ENCODE measurements at regions of chr5 and their contacts with region 1.

Region 1: DNA sequence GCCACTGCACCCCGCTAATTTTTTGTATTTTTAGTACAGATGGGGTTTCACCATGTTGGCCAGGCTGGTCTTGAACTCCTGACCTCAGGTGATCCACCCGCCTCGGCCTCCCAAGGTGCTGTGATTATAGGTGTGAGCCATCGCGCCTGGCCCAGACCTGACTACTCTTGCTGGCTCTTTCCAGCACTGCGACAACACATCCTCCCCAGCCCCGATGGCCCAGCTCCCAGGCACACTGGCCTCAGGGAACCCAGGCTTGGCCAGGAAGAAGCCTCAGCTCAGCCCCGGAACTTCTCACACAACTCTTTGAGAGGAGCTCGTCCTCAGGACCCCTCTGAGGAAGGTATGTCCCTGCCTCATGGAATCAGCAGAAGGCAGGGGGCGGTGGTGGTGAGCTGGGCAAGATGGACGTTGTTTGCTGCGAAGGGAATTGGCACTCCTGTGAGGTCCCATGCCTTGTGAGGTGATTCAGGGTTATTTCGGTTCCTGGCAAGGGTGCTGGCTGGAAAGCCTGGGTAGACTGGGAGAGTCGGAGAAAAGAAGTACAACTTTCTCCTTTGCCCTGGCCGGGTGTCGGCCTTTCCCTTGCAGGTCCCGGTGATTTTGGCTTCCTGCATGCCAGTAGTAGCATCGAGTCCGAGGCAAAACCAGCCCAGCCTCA is 5.9 kb downstream of the DELE1 start:
- DNase-seq: no peak
- H3K4me3 ChIP-seq: no peak overlapping the region
- H3K27ac ChIP-seq: no peak overlapping the region
- H3K4me1 ChIP-seq: no peaks in the 10 kb centered on the region
- H3K27me3 ChIP-seq: no peaks in the 10 kb centered on the region
- CTCF ChIP-seq: no peak
- POLR2A ChIP-seq: no peak

Region 2: DNA sequence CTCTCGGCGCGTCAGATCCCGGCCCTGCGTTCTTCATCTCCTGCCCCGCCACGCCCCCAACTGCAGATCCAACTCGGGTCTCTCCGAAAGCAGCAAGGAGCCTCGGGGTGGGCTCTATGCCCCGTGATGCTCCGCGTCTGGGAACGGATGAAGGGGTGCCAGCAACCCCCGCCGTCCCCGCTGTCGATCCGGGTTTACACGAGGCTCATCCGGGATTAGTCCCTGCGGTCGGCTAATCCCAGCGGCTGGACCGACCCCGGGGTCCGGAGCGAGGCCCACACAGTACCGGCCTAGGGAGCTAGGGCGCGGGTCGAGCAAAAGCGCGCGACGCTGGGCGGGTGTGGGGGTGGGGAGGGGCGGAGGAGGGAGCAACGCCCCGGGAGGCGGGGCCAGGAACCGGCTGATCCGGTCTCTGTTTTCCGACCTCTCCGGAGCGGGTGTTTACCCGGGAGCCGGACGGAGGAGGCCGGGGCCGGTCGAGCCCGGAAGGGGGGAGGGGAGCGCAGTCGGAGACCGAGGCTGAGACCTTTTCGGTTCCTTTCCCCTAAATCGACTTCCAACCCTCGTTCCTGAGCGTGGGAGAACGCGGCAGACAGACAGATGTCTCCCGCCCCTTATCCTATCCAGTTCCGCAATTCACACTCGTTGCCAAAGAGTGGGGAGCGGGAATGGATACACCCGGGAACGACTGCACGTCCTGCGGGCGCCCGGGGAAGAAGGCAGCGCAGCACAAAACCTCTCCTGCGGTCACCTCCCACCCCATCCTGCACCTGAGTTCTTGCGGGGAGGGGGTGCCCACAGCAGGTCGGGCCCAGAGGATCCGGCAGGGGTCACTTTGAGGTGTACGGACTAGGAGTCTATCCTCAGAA is 79.9 kb before region 1 on chr5:
- intact Hi-C with region 1: loop called (anchors 5 kb)
- DNase-seq: peak; percentile 95
- H3K4me3 ChIP-seq: peak overlapping the region; percentile 45 to 69
- H3K27ac ChIP-seq: peak overlapping the region; percentile 94 to 99
- H3K4me1 ChIP-seq: no peaks in the 10 kb centered on the region
- H3K27me3 ChIP-seq: no peaks in the 10 kb centered on the region
- CTCF ChIP-seq: peak in 2 of 4 experiments; percentile 41 to 59
- POLR2A ChIP-seq: peak; percentile 80